ENCODE measurements at regions of chr14 and their contacts with region 1.

Region 1: DNA sequence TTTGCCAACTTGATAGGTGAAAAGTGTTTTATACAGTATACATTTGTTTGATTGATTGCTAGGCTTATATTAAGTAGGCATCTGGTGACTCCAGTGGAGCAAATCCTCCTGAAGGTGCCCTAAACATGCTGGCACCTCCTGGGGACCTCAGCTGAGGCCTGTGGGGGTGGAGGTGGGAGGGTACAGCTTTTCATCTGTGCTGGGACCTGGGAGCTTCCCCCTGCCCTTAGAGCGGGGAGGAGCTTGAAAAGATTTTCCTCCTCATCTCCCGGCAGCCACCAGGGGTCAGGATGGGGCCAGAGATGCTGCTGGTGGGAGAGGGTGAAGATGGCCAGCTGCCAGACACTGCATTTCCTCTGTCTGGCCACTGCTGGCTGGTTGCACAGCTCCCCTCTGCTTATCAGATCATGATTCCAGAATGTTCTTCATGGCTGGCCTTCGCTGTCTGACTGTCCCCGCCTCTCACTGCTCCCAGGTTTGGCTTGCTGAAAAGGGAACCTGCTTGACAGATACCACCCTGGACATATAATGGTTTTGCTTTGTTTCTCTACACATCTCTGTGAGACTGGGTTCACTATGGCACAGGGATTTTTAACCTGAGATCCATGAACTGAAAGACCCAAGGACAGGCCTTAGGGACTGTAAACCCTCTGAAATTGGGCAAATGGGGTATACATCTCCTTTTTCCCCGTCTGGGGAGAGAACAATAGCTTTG is 10.5 kb upstream of the JPH4 start:
- DNase-seq: peak; percentile 41
- H3K4me3 Mint-ChIP-seq: no peak overlapping the region
- H3K27ac Mint-ChIP-seq: no peak overlapping the region
- H3K4me1 Mint-ChIP-seq: no peaks in the 10 kb centered on the region
- H3K27me3 Mint-ChIP-seq: peaks cover 9% of the 10 kb centered on the region

Region 2: DNA sequence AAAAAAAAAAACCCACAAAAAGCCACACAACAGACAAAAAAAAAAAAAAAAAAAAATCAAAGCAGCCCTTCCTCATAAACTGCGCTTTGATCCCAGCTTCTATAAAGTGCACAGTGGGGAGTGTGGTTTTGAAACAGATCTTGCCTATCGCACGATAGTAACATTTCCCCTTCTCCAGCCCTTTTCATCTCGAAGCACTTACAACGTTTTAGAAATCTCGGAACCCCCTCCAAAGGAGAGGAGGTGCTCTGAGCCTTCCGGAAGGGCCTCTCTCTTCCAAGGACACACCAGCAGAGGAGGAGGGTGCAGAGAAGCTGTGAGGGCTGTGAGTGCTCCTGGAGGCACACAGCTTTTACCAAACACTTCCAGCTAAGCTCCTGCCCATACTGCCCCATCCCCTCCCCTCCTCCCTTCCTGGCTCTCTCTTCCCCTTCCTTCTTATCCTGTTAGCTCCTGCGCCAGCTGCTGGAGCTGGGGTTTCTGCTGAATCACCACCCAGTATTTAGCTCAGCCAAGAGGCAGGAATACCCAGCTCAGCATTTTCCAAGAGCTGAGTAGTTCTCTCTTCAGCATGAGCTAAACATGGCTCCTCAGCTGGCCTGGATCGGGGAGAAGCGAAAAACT is 434.0 kb before region 1 on chr14:
- intact Hi-C with region 1: no loop called
- DNase-seq: no peak
- H3K4me3 Mint-ChIP-seq: no peak overlapping the region
- H3K27ac Mint-ChIP-seq: no peak overlapping the region
- H3K4me1 Mint-ChIP-seq: no peaks in the 10 kb centered on the region
- H3K27me3 Mint-ChIP-seq: peaks cover 11% of the 10 kb centered on the region

Region 3: DNA sequence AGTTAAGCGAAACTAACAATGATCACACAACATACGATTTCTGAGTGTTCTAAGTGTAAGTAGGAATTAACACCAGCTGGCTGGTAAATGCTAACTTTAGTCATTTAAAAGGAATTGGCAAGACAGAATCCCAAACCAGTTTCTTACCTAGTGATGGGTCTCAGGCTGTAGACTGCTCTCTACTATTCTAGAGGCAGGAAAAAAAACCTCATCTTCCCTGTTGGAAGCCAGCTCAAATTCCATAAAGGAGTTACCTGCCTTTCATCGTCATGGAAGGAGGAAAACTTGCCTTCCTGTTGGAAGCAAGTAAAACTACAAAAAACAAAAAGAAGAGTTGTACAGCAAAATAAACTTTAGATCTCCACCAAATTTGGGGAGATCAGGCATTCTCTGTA is 381.9 kb before region 1 on chr14:
- intact Hi-C with region 1: no loop called
- DNase-seq: no peak
- H3K4me3 Mint-ChIP-seq: no peak overlapping the region
- H3K27ac Mint-ChIP-seq: no peak overlapping the region
- H3K4me1 Mint-ChIP-seq: no peaks in the 10 kb centered on the region
- H3K27me3 Mint-ChIP-seq: peaks cover 29% of the 10 kb centered on the region

Region 4: DNA sequence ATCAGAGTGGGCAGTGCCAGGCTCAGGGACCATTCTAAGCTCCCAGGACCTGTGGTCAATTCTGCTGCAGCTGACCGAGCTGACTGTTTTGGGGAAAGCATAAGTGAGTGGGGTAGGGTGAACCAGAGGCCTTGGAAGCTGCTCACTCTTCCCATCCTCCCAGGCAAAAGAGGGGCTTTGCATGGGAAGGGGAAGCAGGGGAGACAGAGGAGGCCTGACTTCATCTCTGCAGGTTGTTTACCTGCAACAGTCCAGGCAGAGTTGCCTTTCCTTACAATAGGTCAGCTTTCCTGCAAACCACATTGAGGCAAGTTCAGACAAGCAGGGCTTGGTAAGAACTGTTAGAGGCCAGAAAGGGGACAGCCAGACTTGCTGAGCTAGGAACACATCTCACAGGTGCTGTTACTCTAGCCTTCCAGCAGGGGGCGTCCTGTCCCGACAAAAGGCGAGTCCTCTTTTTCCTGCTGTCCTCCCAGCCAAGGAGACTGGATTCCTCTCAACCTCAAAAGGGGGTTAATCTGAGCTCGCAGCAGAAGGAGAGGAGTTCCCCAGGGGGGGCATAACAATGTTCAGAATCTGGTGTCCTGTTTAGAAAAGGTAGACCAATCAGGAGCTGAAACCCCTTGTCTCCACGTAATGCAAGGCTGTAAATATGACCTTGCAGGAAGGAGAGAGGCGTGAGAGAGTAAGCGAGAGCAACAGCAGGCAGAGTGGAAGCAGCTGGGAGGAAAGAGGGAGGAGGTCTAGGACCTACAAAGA is 42.8 kb after region 1 on chr14:
- intact Hi-C with region 1: loop called (anchors 1 kb)
- DNase-seq: peak; percentile 53
- H3K4me3 Mint-ChIP-seq: peak overlapping the region; percentile 16
- H3K27ac Mint-ChIP-seq: no peak overlapping the region
- H3K4me1 Mint-ChIP-seq: peaks cover 16% of the 10 kb centered on the region
- H3K27me3 Mint-ChIP-seq: peaks cover 2% of the 10 kb centered on the region

Region 5: GRCh38 chr14:23665375-23666192 is 76.5 kb after region 1 on chr14:
- intact Hi-C with region 1: loop called (anchors 2 kb)
- DNase-seq: no peak
- H3K4me3 Mint-ChIP-seq: no peak overlapping the region
- H3K27ac Mint-ChIP-seq: no peak overlapping the region
- H3K4me1 Mint-ChIP-seq: no peaks in the 10 kb centered on the region
- H3K27me3 Mint-ChIP-seq: peaks cover 7% of the 10 kb centered on the region

Region 6: GRCh38 chr14:23727566-23728335 is 138.7 kb after region 1 on chr14:
- intact Hi-C with region 1: loop called (anchors 2 kb)
- DNase-seq: no peak
- H3K4me3 Mint-ChIP-seq: no peak overlapping the region
- H3K27ac Mint-ChIP-seq: no peak overlapping the region
- H3K4me1 Mint-ChIP-seq: no peaks in the 10 kb centered on the region
- H3K27me3 Mint-ChIP-seq: peaks cover 2% of the 10 kb centered on the region

Region 7: GRCh38 chr14:23929822-23930294 is 340.8 kb after region 1 on chr14:
- intact Hi-C with region 1: loop called (anchors 1 kb)
- DNase-seq: peak; percentile 66
- H3K4me3 Mint-ChIP-seq: no peak overlapping the region
- H3K27ac Mint-ChIP-seq: no peak overlapping the region
- H3K4me1 Mint-ChIP-seq: no peaks in the 10 kb centered on the region
- H3K27me3 Mint-ChIP-seq: peaks cover 6% of the 10 kb centered on the region